AG04450 (cell line): ENCODE measurements at regions of chr3 and their contacts with region 1.

Region 1: DNA sequence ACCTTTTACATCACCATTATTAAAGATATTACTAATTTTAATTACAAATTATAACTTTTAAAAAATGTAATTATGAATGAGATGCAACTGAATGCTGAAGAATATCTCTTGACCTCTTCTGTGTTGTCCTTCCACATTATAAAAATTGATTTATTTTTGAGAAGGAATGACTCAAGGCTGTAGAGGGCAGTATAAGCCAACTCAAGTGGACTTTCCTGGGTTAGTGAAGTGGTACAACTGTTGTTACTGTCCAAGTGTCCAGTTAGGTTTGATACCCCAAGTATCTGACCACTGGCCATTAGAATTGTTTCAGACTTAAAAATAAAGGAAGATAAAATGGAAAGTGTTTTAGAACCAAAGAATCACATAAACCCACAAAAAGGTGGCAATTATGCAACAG is 51.9 kb downstream of the BBX start:
- DNase-seq: peak; percentile 18
- H3K4me3 ChIP-seq: no peak overlapping the region
- H3K27ac ChIP-seq: no peak overlapping the region
- H3K27me3 ChIP-seq: no peaks in the 10 kb centered on the region
- CTCF ChIP-seq: peak; percentile 67

Region 2: GRCh38 chr3:107699682-107700081 is 125.0 kb after region 1 on chr3:
- CTCF ChIA-PET with region 1: no interaction called
- POLR2A ChIA-PET with region 1: no interaction called
- DNase-seq: no peak
- H3K4me3 ChIP-seq: no peak overlapping the region
- H3K27ac ChIP-seq: no peak overlapping the region
- H3K27me3 ChIP-seq: no peaks in the 10 kb centered on the region
- CTCF ChIP-seq: no peak

Region 3: DNA sequence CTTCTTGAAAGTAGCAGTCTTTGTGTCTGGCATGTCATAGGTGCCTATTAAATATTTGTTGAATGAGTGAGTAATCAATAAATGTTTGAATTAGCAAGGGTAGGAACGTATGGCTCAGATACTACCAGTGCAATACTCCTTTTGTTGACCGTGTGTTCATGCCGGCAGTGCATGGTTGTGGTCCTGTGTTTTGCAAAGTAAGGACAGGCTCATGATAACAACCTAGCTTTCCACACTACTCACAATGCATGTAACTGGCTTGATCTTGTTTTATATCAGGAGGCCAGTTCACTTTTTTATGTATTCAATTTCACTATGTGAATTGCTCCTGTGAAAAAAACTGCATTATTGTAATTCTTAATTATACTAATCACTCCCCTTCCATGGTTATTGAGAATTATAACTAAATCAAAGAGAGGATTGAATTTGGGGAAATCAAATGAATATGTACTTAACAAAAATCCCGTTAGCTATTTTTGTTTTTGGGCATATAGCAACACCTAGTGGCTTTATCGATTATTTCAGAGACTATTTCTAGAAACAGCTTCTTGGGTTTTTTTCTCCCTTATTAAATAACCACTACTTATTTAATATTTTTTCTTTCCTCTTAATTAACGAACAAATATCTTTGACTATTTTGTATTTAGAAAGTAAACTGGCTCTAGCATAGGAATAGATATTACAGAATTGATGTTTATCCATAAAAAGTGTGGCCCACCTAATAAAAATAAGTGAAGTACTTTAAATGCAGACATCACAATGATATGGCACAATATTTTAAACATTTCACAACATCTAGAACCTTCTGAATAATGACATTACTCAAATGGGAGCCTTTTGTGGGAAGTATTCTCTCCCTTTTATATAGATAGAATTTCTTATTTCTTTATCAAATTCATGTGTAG is 166.6 kb after region 1 on chr3:
- CTCF ChIA-PET with region 1: interaction called, 24 read pairs
- POLR2A ChIA-PET with region 1: no interaction called
- DNase-seq: no peak
- H3K4me3 ChIP-seq: no peak overlapping the region
- H3K27ac ChIP-seq: no peak overlapping the region
- H3K27me3 ChIP-seq: no peaks in the 10 kb centered on the region
- CTCF ChIP-seq: peak; percentile 62

Region 4: GRCh38 chr3:108818404-108818803 is 1243.8 kb after region 1 on chr3:
- CTCF ChIA-PET with region 1: no interaction called
- POLR2A ChIA-PET with region 1: no interaction called
- DNase-seq: no peak
- H3K4me3 ChIP-seq: no peak overlapping the region
- H3K27ac ChIP-seq: no peak overlapping the region
- H3K27me3 ChIP-seq: no peaks in the 10 kb centered on the region
- CTCF ChIP-seq: peak; percentile 28